ENCODE measurements at regions of chr1 and their contacts with region 1.

Region 1: DNA sequence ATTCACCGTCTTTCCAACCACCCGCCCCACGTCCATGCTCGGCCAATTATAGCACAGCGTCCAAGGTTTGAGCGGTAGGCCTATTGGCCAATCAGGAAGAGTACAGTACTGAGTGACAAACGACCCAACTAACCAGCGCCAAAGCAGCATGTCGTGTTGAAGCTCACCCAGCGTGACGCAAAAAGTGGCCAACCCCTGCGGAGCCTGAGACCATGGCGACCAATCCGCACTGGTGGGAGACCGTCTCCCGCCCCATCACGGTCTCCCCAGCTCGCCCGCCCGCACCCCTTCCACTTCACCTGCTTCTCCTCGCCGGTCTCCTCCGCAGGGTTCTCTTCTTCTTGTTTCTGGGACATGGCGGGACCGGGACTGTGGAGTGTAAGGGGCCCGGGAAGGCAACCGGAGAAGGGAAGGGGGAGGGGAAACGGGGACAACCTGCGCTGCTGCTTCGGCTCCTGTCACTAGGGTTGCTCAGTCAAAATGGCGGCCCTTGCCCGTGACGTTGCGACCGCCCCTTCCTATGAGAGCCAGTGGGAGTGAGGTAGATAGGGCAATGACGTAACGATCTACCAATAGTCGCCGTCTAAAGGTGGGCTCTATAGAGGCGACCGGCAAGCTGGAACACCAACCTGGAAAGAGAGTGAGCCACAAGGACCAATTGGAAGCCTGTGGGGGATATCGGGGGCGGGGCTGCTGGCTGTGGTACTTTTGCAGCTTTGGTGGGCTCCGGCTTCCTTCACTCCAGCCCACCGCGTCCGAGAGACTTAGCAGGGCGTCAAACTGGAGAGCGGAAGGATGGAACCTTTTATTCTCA is at the start of gene ENSA:
- DNase-seq: peak; percentile 94 to 99
- ATAC-seq: peak; percentile 82 to 95 (median 84)
- H3K4me3 ChIP-seq: peak within 1 kb of the TSS; percentile 62
- H3K4me3 Mint-ChIP-seq: no peak within 1 kb of the TSS
- H3K27ac ChIP-seq: peak within 1 kb of the TSS; percentile 99
- H3K27ac Mint-ChIP-seq: no peak within 1 kb of the TSS
- H3K4me1 ChIP-seq: peaks cover 18% of the 10 kb centered on the region
- H3K4me1 Mint-ChIP-seq: peaks cover 6 to 9% of the 10 kb centered on the region in 2 donors
- H3K27me3 ChIP-seq: no peaks in the 10 kb centered on the region
- H3K27me3 Mint-ChIP-seq: no peaks in the 10 kb centered on the region
- CTCF ChIP-seq: no peak
- total RNA-seq, gene ENSA: 185 to 228 (median 220) TPM

Region 2: GRCh38 chr1:150515328-150516048 is 113.8 kb before region 1 on chr1 and contains the start of gene FALEC:
- intact Hi-C with region 1: loop called (anchors 1 kb)
- DNase-seq: peak; percentile 89 to 95
- ATAC-seq: peak; percentile 99 to 100 (median 100)
- H3K4me3 ChIP-seq: peak within 1 kb of the TSS; percentile 91
- H3K4me3 Mint-ChIP-seq: peak within 1 kb of the TSS; percentile 93
- H3K27ac ChIP-seq: peak within 1 kb of the TSS; percentile 60
- H3K27ac Mint-ChIP-seq: peak within 1 kb of the TSS; percentile 62 to 77
- H3K4me1 ChIP-seq: peaks cover 16% of the 10 kb centered on the region
- H3K4me1 Mint-ChIP-seq: peaks cover 8 to 22% of the 10 kb centered on the region in 2 donors
- H3K27me3 ChIP-seq: no peaks in the 10 kb centered on the region
- H3K27me3 Mint-ChIP-seq: no peaks in the 10 kb centered on the region
- CTCF ChIP-seq: no peak
- total RNA-seq, gene FALEC: not detected

Region 3: GRCh38 chr1:150578965-150579798 is 50.1 kb before region 1 on chr1 and contains the start of gene MCL1:
- intact Hi-C with region 1: loop called (anchors 2 kb)
- DNase-seq: peak; percentile 88 to 93
- ATAC-seq: peak; percentile 80 to 95 (median 83)
- H3K4me3 ChIP-seq: peak within 1 kb of the TSS; percentile 79
- H3K4me3 Mint-ChIP-seq: peak within 1 kb of the TSS; percentile 100
- H3K27ac ChIP-seq: peak within 1 kb of the TSS; percentile 100
- H3K27ac Mint-ChIP-seq: peak within 1 kb of the TSS; percentile 96 to 99
- H3K4me1 ChIP-seq: peaks cover 16% of the 10 kb centered on the region
- H3K4me1 Mint-ChIP-seq: peaks cover 57 to 59% of the 10 kb centered on the region in 2 donors
- H3K27me3 ChIP-seq: no peaks in the 10 kb centered on the region
- H3K27me3 Mint-ChIP-seq: no peaks in the 10 kb centered on the region
- CTCF ChIP-seq: no peak
- total RNA-seq, gene MCL1: 929 to 1,396 (median 938) TPM

Region 4: DNA sequence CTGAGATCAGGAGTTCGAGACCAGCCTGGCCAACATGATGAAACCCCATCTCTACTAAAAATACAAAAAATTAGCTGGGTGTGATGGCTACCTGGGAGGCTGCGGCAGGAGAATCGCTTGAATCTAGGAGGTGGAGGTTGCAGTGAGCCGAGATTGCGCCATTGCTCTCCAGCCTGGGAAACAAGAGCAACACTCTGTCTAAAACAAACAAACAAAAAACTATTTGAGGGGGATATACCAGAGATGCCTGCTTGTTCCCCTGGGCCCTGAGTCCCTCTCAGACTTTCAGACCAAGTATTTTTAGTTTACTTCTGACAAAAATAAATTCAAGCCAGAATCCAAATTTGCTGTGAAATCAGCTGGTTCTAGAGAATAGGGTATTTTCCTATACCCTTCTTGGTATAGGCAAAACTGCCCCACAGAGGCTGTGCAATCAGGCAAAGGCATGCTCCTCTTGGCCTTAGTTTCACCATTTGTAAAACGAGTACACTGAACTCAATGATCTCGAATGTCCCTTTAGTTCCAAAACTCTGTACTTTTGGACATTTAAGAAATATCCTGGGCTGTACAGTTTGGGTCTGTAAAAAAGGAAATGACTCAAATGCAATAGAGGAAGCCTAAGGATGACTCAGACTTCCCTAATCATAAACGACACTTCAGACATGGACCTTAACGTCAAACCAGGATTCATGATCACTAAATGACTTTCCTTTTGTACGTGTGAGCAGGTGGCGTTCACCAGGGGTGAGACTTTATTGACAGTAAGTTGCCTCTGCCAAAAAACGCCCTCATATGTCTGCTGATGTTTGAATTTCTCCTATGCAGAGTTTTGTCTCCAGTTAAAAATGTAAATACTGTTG is 16.0 kb before region 1 on chr1:
- intact Hi-C with region 1: loop called (anchors 1 kb)
- DNase-seq: peak; percentile 27 to 81
- ATAC-seq: peak; percentile 19 to 64 (median 42)
- H3K4me3 ChIP-seq: no peak overlapping the region
- H3K4me3 Mint-ChIP-seq: peak overlapping the region; percentile 33
- H3K27ac ChIP-seq: peak overlapping the region; percentile 98
- H3K27ac Mint-ChIP-seq: peak overlapping the region; percentile 90 to 91
- H3K4me1 ChIP-seq: peaks cover 42% of the 10 kb centered on the region
- H3K4me1 Mint-ChIP-seq: peaks cover 40 to 48% of the 10 kb centered on the region in 2 donors
- H3K27me3 ChIP-seq: no peaks in the 10 kb centered on the region
- H3K27me3 Mint-ChIP-seq: no peaks in the 10 kb centered on the region
- CTCF ChIP-seq: no peak

Measured in natural killer cell (primary cell).